Activated CD4-positive, alpha-beta T cell treated with anti-CD3 and anti-CD28 coated beads for 36 hours (primary cell): ENCODE measurements at regions of chr14 and their contacts with region 1.

Region 1: GRCh38 chr14:94485944-94486841 is 10.2 kb upstream of the SERPINA9 start:
- DNase-seq: peak; percentile 70
- ATAC-seq: peak; percentile 62
- H3K4me3 Mint-ChIP-seq: no peak overlapping the region
- H3K27ac Mint-ChIP-seq: peak overlapping the region; percentile 27
- H3K4me1 Mint-ChIP-seq: peaks cover 29% of the 10 kb centered on the region
- H3K27me3 Mint-ChIP-seq: peaks cover 3% of the 10 kb centered on the region

Region 2: DNA sequence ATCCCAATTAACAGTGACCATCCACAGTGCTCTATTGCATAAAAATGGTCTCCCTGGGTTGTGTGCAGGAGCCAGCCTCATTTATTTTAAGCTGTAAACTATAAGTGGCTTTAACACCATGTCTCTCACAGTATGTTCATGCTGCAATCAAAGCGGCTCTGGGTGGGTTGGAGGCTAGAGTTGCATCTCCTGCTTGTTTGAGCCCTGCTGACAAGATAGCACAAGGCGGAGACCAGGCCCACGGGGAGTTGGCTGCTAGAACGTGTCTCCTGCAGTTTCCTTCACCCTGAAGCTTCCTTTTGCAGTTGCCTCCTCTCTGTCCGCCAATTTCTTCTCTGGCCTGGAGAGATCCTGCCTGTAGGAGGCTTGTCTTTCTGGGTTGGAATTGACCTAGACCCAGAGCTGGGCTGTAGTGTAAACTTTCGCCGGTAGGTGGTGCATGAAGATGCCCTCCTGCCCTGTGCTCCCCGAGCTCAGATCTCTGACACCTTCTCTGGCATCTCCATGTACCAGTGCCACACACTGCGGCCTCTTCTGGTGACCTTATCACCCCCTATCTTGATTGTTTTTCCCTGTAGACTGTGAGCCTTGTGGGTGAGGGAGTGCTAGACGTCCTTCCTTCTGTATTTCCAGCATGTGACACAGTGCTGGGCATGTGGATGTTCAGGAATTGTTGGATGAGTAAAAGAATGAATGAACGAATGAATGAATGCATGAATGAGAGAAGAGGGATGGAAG is 449.7 kb before region 1 on chr14:
- CTCF ChIA-PET with region 1: interaction called, 4 read pairs
- POLR2A ChIA-PET with region 1: no interaction called
- intact Hi-C with region 1: loop called in 1 of 2 experiments (anchors 5 kb)
- DNase-seq: peak; percentile 89
- ATAC-seq: peak; percentile 100
- H3K4me3 Mint-ChIP-seq: no peak overlapping the region
- H3K27ac Mint-ChIP-seq: no peak overlapping the region
- H3K4me1 Mint-ChIP-seq: peaks cover 3% of the 10 kb centered on the region
- H3K27me3 Mint-ChIP-seq: no peaks in the 10 kb centered on the region

Region 3: GRCh38 chr14:94337274-94337673 is 148.9 kb before region 1 on chr14:
- CTCF ChIA-PET with region 1: no interaction called
- POLR2A ChIA-PET with region 1: no interaction called
- intact Hi-C with region 1: no loop called
- DNase-seq: peak; percentile 43
- ATAC-seq: no peak
- H3K4me3 Mint-ChIP-seq: no peak overlapping the region
- H3K27ac Mint-ChIP-seq: peak overlapping the region; percentile 14
- H3K4me1 Mint-ChIP-seq: peaks cover 37% of the 10 kb centered on the region
- H3K27me3 Mint-ChIP-seq: peaks cover 8% of the 10 kb centered on the region

Region 4: GRCh38 chr14:94355191-94355797 is 130.9 kb before region 1 on chr14:
- CTCF ChIA-PET with region 1: interaction called, 3 read pairs
- POLR2A ChIA-PET with region 1: interaction called, 3 read pairs
- intact Hi-C with region 1: loop called (anchors 1 to 5 kb)
- DNase-seq: peak; percentile 65
- ATAC-seq: peak; percentile 16
- H3K4me3 Mint-ChIP-seq: no peak overlapping the region
- H3K27ac Mint-ChIP-seq: peak overlapping the region; percentile 84
- H3K4me1 Mint-ChIP-seq: peaks cover 58% of the 10 kb centered on the region
- H3K27me3 Mint-ChIP-seq: peaks cover 6% of the 10 kb centered on the region

Region 5: DNA sequence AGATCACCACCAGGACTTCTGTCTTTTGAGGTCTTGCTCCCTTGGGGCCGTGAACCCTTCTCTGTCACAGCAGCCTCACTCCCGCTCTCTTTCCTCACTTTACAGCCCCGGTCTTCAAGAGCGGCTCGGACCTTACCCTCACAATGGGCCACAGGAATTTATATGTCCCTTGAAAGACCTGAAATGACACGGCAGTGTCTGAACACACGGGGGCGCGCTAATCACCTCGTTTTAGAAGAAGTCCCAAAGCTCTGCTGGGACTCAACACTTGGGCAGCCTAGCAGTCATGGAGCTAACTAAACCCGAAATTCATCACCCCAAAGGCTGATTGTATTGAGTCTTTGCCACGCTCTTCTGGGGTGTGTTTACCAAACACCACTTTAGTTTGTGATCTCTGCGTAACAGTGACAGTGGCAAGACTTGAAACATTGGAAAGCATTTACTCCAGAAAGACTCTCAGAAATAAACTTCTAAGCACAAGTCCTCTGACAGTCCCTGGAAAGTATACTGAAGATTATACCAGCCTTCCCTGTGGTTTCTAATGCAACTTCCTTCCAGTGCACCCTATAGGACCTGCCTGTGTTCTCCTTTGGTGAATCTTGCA is 62.6 kb before region 1 on chr14:
- CTCF ChIA-PET with region 1: interaction called, 11 read pairs
- POLR2A ChIA-PET with region 1: no interaction called
- intact Hi-C with region 1: loop called in 1 of 2 experiments (anchors 2 kb)
- DNase-seq: peak; percentile 84
- ATAC-seq: peak; percentile 74
- H3K4me3 Mint-ChIP-seq: peak overlapping the region; percentile 6
- H3K27ac Mint-ChIP-seq: peak overlapping the region; percentile 73
- H3K4me1 Mint-ChIP-seq: peaks cover 13% of the 10 kb centered on the region
- H3K27me3 Mint-ChIP-seq: peaks cover 7% of the 10 kb centered on the region

Region 6: DNA sequence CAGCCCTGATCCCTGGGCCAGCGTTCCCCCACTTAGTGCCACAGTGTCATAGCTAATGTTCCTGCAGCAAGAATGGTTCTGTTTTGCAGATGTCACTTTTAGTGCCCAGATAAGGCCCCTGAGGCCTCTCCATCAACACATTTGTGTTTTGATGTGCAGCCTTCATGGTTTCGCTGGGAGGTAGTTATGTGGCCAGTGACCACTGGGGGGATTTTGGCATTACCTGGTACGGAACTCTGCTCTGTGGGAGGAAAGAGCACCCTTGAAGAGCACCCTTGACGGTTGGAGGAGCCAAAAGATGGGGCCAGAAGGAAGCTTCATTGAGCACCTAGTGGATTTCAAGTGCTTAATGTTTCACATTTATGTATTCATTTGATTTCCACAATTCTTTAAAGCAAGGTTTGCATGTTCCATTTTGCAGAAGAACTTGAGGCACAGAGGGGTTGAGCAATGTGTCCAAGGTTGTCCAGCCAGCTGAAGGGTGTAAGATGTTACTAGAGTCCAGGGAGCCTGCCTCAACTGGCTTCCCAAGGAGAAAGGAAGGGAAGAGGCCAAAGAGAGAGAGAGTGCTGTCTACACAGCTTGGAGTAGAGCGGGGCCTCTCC is 46.6 kb before region 1 on chr14:
- CTCF ChIA-PET with region 1: interaction called, 42 read pairs
- POLR2A ChIA-PET with region 1: no interaction called
- intact Hi-C with region 1: loop called (anchors 1 kb)
- DNase-seq: no peak
- ATAC-seq: no peak
- H3K4me3 Mint-ChIP-seq: no peak overlapping the region
- H3K27ac Mint-ChIP-seq: no peak overlapping the region
- H3K4me1 Mint-ChIP-seq: no peaks in the 10 kb centered on the region
- H3K27me3 Mint-ChIP-seq: peaks cover 8% of the 10 kb centered on the region

Region 7: DNA sequence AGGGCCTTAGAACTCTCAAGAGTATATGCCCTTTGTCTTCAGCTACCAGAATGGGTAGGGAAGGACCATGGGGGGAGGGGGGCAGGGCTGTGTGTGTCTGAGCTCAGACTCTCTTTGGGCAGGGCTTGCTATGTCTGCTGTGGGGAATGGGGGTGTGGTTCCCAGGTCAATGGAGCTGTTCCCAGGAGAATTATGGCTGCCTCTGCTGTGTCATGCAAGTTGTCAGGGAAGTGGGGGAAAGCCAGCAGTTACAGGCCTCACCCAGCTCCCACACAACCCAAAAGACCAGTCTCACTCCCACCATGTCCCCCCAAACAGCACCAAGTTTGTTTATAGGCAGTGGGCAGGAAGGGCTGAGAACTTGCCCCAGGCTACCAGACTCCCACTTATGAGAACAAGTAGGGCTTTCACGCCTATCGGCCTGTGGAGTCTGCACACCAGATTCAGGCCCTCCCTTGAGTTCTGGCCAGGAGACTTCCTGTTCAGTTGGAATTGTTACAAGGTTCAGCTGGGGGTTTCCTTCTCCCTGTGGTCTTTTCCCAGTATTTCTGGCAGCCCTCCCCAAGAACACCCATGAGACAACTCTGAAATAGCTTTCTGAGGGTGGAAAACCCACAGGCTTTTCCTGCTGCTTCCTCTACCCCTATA is 27.5 kb before region 1 on chr14:
- CTCF ChIA-PET with region 1: interaction called, 10 read pairs
- POLR2A ChIA-PET with region 1: no interaction called
- intact Hi-C with region 1: no loop called
- DNase-seq: no peak
- ATAC-seq: no peak
- H3K4me3 Mint-ChIP-seq: no peak overlapping the region
- H3K27ac Mint-ChIP-seq: no peak overlapping the region
- H3K4me1 Mint-ChIP-seq: peaks cover 10% of the 10 kb centered on the region
- H3K27me3 Mint-ChIP-seq: peaks cover 20% of the 10 kb centered on the region

Region 8: GRCh38 chr14:94476023-94476422 is 10.2 kb before region 1 on chr14 and contains the start of gene SERPINA9:
- CTCF ChIA-PET with region 1: interaction called, 14 read pairs
- POLR2A ChIA-PET with region 1: no interaction called
- intact Hi-C with region 1: no loop called
- DNase-seq: no peak
- ATAC-seq: no peak
- H3K4me3 Mint-ChIP-seq: no peak within 1 kb of the TSS
- H3K27ac Mint-ChIP-seq: no peak within 1 kb of the TSS
- H3K4me1 Mint-ChIP-seq: peaks cover 4% of the 10 kb centered on the region
- H3K27me3 Mint-ChIP-seq: peaks cover 4% of the 10 kb centered on the region
- total RNA-seq, gene SERPINA9: not detected

Region 9: DNA sequence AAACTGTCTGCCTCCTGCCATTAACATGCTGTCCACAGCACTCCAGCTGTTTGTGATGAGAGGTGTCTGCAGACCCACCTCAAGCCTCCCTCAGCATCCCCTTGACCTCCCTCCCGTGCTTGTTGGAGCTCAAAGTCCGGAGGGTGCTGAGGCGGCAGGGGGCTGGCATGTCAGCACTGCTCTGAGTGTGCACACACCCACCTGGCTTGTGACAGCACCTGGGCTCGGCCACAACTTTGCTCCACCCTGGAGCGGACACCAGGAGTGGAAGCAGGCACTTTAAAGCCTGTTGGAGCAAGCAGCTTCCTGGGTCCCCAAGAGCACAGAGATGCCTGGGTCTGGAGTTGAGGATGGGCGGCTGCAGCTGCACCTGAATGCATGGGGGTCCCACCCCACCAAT is 146.9 kb after region 1 on chr14:
- CTCF ChIA-PET with region 1: no interaction called
- POLR2A ChIA-PET with region 1: no interaction called
- intact Hi-C with region 1: no loop called
- DNase-seq: no peak
- ATAC-seq: no peak
- H3K4me3 Mint-ChIP-seq: no peak overlapping the region
- H3K27ac Mint-ChIP-seq: no peak overlapping the region
- H3K4me1 Mint-ChIP-seq: no peaks in the 10 kb centered on the region
- H3K27me3 Mint-ChIP-seq: peaks cover 11% of the 10 kb centered on the region